CD8-positive, alpha-beta T cell (primary cell): ENCODE measurements at regions of chr7 and their contacts with region 1.

Region 1: DNA sequence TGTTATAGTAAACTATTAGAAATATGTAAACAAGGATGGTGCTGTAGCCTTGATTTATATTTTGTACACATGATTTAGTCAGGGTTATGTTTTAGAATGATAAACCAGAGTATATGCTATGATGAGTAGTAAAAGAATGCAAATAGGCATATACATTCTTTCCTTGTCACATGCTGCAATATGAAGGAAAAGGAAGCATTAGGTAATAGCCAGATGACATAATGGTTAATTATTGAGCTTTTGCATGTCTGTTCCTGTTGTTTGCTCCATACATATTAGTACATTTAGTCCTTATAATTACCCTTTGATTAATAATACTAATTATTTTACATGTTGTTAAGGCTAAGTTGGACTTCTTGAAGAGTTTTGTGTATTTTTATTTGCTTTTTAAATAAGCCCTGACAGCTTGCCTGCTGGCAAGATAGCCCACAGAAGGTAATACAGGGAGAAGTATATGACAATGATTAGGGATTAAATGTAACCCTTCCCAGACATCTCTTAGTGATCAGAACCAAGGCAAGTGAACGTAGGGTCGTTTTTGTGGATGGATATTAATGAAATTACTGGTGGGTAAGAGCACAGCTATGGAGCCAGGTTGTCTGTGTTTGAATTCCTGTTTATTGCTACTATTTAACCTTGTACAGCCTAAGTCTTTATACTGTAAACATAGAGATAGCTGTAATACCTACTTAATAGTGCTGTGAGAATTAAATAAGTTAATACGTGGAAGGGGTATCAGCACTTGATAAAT is 68.4 kb downstream of the PHTF2 start:
- DNase-seq: no peak
- ATAC-seq: no peak
- H3K4me3 ChIP-seq: no peak overlapping the region
- H3K4me3 Mint-ChIP-seq: no peak overlapping the region
- H3K27ac ChIP-seq: no peak overlapping the region
- H3K27ac Mint-ChIP-seq: no peak overlapping the region
- H3K4me1 ChIP-seq: no peaks in the 10 kb centered on the region
- H3K4me1 Mint-ChIP-seq: peaks cover 10% of the 10 kb centered on the region
- H3K27me3 ChIP-seq: no peaks in the 10 kb centered on the region
- H3K27me3 Mint-ChIP-seq: no peaks in the 10 kb centered on the region
- CTCF ChIP-seq: no peak

Region 2: DNA sequence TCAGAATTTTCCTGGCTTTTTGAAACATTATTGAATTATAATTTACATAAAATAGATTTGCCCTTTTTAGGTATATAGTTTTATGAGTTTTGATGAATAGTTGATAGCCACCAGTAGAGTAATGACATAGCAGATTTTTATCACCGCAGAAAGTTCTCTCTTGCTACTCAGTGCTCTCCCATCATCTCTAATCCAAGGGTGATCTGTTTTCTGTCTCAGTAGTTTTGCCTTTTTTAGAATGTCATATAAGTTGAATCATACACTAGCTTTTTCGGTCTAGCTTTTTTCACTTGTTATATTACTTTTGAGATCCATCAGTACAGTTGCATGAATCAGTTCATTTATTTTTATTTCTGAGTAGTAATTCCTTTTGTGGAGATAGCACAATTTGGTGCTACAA is 152.8 kb before region 1 on chr7:
- CTCF ChIA-PET with region 1: no interaction called
- POLR2A ChIA-PET with region 1: no interaction called
- intact Hi-C with region 1: no loop called
- DNase-seq: no peak
- ATAC-seq: no peak
- H3K4me3 ChIP-seq: no peak overlapping the region
- H3K4me3 Mint-ChIP-seq: no peak overlapping the region
- H3K27ac ChIP-seq: no peak overlapping the region
- H3K27ac Mint-ChIP-seq: peak overlapping the region; percentile 30
- H3K4me1 ChIP-seq: peaks cover 10% of the 10 kb centered on the region
- H3K4me1 Mint-ChIP-seq: peaks cover 67% of the 10 kb centered on the region
- H3K27me3 ChIP-seq: no peaks in the 10 kb centered on the region
- H3K27me3 Mint-ChIP-seq: no peaks in the 10 kb centered on the region
- CTCF ChIP-seq: no peak

Region 3: GRCh38 chr7:77910124-77910523 is 43.2 kb after region 1 on chr7:
- CTCF ChIA-PET with region 1: no interaction called
- POLR2A ChIA-PET with region 1: no interaction called
- intact Hi-C with region 1: no loop called
- DNase-seq: no peak
- ATAC-seq: no peak
- H3K4me3 ChIP-seq: no peak overlapping the region
- H3K4me3 Mint-ChIP-seq: no peak overlapping the region
- H3K27ac ChIP-seq: no peak overlapping the region
- H3K27ac Mint-ChIP-seq: no peak overlapping the region
- H3K4me1 ChIP-seq: no peaks in the 10 kb centered on the region
- H3K4me1 Mint-ChIP-seq: no peaks in the 10 kb centered on the region
- H3K27me3 ChIP-seq: no peaks in the 10 kb centered on the region
- H3K27me3 Mint-ChIP-seq: no peaks in the 10 kb centered on the region
- CTCF ChIP-seq: no peak

Region 4: GRCh38 chr7:77923419-77923818 is 56.5 kb after region 1 on chr7:
- CTCF ChIA-PET with region 1: no interaction called
- POLR2A ChIA-PET with region 1: no interaction called
- intact Hi-C with region 1: loop called in 1 of 2 experiments (anchors 5 kb)
- DNase-seq: no peak
- ATAC-seq: no peak
- H3K4me3 ChIP-seq: no peak overlapping the region
- H3K4me3 Mint-ChIP-seq: no peak overlapping the region
- H3K27ac ChIP-seq: no peak overlapping the region
- H3K27ac Mint-ChIP-seq: no peak overlapping the region
- H3K4me1 ChIP-seq: no peaks in the 10 kb centered on the region
- H3K4me1 Mint-ChIP-seq: peaks cover 7% of the 10 kb centered on the region
- H3K27me3 ChIP-seq: no peaks in the 10 kb centered on the region
- H3K27me3 Mint-ChIP-seq: no peaks in the 10 kb centered on the region
- CTCF ChIP-seq: no peak